HepG2 (cell line): ENCODE measurements at regions of chr13 and their contacts with region 1.

Region 1: GRCh38 chr13:108155185-108156106 is 59.9 kb downstream of the LIG4 start:
- DNase-seq: peak; percentile 40
- ATAC-seq: no peak
- H3K4me3 ChIP-seq: peak overlapping the region in 1 of 3 experiments; percentile 39; a peak in 1 of 6 replicates
- H3K27ac ChIP-seq: peak overlapping the region; percentile 66
- H3K4me1 ChIP-seq: peaks cover 28% of the 10 kb centered on the region
- H3K27me3 ChIP-seq: no peaks in the 10 kb centered on the region
- CTCF ChIP-seq: peak; percentile 72
- EP300 ChIP-seq: no peak
- POLR2A ChIP-seq: no peak
- RAD21 ChIP-seq: peak; percentile 59; the same call in 1 of the 2 replicates

Region 2: DNA sequence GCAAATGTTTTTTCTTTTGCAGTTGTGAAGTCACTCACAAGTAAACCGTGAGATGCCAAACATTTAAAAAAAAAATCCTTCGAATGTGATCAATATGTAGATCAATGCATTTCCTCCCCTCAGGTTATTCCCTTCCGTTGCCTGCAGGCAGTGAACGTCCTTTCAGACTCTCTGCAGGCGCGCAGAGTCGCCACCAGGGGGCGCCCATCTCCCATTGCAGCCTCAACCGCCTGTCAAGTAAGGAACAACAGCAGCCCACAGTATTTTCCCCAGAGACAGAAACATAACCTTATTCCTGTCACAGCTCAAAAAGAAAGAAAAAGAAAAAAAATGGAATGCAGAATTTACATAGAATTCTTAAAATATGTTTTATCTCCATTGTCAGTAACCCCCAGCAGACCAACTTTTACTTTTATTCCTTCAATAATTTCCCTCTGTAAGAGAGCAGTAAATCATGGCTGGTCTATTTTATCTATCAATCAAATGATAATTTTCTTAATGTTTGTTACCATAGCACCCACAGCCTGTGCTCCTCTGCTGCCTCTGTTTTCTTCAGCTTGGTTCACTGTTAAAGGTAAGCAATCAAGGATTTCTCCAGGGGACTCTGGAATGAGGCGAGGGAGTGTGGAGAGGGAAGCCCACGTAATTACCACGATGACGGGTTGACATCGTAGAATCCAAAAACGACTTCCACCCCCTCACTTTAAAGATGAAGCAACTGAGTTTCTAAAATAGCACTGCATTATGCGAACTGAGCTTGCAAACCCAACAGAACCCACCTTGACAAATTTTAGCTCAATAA is 949.9 kb before region 1 on chr13:
- CTCF ChIA-PET with region 1: interaction called, 9 read pairs
- POLR2A ChIA-PET with region 1: no interaction called
- in situ Hi-C with region 1: no loop called
- intact Hi-C with region 1: loop called (anchors 1 kb)
- DNase-seq: peak; percentile 31
- ATAC-seq: peak; percentile 94
- H3K4me3 ChIP-seq: no peak overlapping the region
- H3K27ac ChIP-seq: no peak overlapping the region
- H3K4me1 ChIP-seq: peaks cover 13% of the 10 kb centered on the region
- H3K27me3 ChIP-seq: no peaks in the 10 kb centered on the region
- CTCF ChIP-seq: peak; percentile 84
- EP300 ChIP-seq: no peak
- POLR2A ChIP-seq: no peak
- RAD21 ChIP-seq: 0 out of 2 replicates have a peak, but pooled peaks have one; percentile 45

Region 3: DNA sequence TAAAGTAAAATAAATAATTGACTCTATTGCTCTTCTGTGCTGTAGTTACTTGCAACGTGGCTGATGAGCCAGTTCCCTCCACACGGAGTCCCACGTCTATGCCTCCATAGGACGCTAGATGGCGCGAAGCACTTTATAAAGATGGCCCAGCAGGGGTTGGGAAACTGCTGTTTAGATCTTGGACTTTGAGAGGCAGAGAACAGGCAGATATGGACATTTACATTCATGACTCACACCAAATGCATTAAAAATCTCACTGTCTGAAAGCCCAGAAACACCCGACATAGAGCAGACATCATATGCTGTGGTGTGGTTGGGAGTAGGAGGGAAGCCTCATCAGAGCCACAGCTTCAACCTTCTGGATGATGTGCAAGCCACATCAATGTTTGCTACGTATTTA is 944.4 kb before region 1 on chr13:
- CTCF ChIA-PET with region 1: interaction called, 9 read pairs
- POLR2A ChIA-PET with region 1: no interaction called
- in situ Hi-C with region 1: loop called (anchors 5 kb)
- intact Hi-C with region 1: loop called (anchors 1 kb)
- DNase-seq: peak; percentile 78
- ATAC-seq: peak; percentile 100
- H3K4me3 ChIP-seq: no peak overlapping the region
- H3K27ac ChIP-seq: no peak overlapping the region
- H3K4me1 ChIP-seq: no peaks in the 10 kb centered on the region
- H3K27me3 ChIP-seq: peaks cover 0 to 26% of the 10 kb centered on the region in 2 experiments; a peak in 2 of 5 replicates
- CTCF ChIP-seq: peak; percentile 90
- EP300 ChIP-seq: no peak
- POLR2A ChIP-seq: no peak
- RAD21 ChIP-seq: no peak; the same call in 1 of the 2 replicates

Region 4: DNA sequence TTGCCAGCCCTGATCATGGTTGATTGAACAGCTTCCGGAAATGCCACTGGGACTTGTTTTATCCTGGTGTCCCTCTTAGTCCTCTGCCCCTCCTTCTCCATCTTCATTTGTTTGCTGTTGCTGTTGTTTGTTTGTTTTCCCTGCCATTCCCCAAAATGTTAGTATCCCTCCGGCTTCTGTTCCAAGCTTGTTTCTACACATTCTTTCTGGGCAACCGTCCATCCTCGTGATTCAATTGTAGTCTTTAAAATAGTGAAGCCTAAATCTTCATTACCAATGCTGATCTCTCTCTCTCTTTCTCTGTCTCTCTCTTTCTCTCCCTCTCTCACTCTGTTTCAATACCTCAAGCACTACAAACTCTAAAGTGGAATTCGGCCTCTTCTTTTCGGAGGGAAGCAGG is 938.2 kb before region 1 on chr13:
- CTCF ChIA-PET with region 1: interaction called, 3 read pairs
- POLR2A ChIA-PET with region 1: no interaction called
- in situ Hi-C with region 1: loop called (anchors 5 kb)
- intact Hi-C with region 1: no loop called
- DNase-seq: no peak
- ATAC-seq: no peak
- H3K4me3 ChIP-seq: no peak overlapping the region
- H3K27ac ChIP-seq: no peak overlapping the region
- H3K4me1 ChIP-seq: no peaks in the 10 kb centered on the region
- H3K27me3 ChIP-seq: peaks cover 0 to 30% of the 10 kb centered on the region in 2 experiments; a peak in 2 of 5 replicates
- CTCF ChIP-seq: no peak
- EP300 ChIP-seq: no peak
- POLR2A ChIP-seq: no peak
- RAD21 ChIP-seq: no peak

Region 5: DNA sequence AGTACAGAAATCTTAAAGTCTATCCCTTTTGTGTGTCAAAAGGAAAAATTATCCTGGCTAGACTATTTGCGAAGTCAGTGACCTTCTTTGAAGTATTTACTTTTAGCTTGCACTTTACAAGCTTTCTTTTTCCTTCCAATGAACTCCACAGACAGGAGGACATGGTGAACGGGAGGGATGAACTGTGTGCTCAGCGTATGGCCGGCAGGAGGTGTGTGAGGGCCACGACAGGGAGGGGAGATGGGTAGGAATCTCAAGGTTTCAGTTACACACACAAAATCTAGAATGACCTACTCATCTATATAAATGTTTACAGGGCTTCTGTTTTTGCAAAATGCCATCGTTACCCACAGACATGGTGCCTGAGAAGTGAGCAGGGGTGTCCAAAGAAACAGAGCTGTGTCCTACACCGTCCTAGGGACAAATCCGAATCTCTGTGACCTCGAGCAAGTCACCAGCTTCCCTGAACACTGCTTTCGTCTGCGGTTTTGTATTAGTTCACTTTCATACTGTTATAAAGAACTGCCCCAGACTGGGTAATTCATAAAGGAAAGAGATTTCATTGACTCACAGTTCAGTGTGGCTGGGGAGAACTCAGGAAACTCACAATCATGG is 477.3 kb before region 1 on chr13:
- CTCF ChIA-PET with region 1: interaction called, 7 read pairs
- POLR2A ChIA-PET with region 1: no interaction called
- in situ Hi-C with region 1: loop called (anchors 10 kb)
- intact Hi-C with region 1: loop called (anchors 1 kb)
- DNase-seq: no peak
- ATAC-seq: peak; percentile 93
- H3K4me3 ChIP-seq: no peak overlapping the region
- H3K27ac ChIP-seq: no peak overlapping the region
- H3K4me1 ChIP-seq: no peaks in the 10 kb centered on the region
- H3K27me3 ChIP-seq: no peaks in the 10 kb centered on the region
- CTCF ChIP-seq: peak; percentile 58
- EP300 ChIP-seq: no peak
- POLR2A ChIP-seq: no peak
- RAD21 ChIP-seq: no peak

Region 6: DNA sequence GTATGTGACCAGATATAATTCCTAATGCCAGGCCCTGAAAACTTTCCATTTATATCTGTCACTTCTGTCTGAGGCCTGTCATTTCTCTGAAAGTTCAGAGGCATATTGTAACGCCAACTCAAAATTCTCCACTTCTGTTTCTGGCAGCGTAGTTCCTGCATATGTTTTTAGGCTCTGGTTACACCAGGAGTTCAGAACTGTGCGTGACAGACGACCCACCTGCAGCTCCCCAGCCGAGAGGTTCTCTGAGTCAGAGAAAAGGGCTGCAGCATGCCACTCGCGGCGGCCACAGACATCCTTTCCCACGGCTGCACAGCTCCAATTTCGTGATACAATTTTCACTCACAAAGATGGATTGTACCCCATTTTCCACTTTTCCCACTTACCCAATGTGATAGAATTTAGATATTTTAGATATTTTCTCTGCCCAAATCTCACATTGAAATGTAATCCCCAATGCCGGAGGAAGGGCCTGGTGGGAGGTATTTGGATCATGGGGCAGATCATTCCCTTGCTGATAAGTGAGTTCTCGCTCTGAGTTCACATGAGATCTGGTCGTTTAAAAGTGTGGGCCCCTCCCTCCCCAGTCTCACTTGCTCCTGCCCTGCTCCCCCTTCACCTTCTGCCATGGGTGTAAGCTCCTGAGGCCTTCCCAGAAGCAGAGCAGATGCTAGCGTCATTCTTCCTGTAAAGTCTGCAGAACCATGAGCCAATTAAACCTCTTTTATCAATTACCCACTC is 248.2 kb before region 1 on chr13:
- CTCF ChIA-PET with region 1: interaction called, 15 read pairs
- POLR2A ChIA-PET with region 1: no interaction called
- in situ Hi-C with region 1: no loop called
- intact Hi-C with region 1: no loop called
- DNase-seq: no peak
- ATAC-seq: no peak
- H3K4me3 ChIP-seq: no peak overlapping the region
- H3K27ac ChIP-seq: no peak overlapping the region
- H3K4me1 ChIP-seq: no peaks in the 10 kb centered on the region
- H3K27me3 ChIP-seq: no peaks in the 10 kb centered on the region
- CTCF ChIP-seq: no peak
- EP300 ChIP-seq: no peak
- POLR2A ChIP-seq: no peak
- RAD21 ChIP-seq: no peak

Region 7: GRCh38 chr13:108003607-108004006 is 151.8 kb before region 1 on chr13:
- CTCF ChIA-PET with region 1: no interaction called
- POLR2A ChIA-PET with region 1: no interaction called
- in situ Hi-C with region 1: no loop called
- intact Hi-C with region 1: no loop called
- DNase-seq: no peak
- ATAC-seq: no peak
- H3K4me3 ChIP-seq: no peak overlapping the region
- H3K27ac ChIP-seq: no peak overlapping the region
- H3K4me1 ChIP-seq: no peaks in the 10 kb centered on the region
- H3K27me3 ChIP-seq: no peaks in the 10 kb centered on the region
- CTCF ChIP-seq: no peak
- EP300 ChIP-seq: no peak
- POLR2A ChIP-seq: no peak
- RAD21 ChIP-seq: no peak

Region 8: DNA sequence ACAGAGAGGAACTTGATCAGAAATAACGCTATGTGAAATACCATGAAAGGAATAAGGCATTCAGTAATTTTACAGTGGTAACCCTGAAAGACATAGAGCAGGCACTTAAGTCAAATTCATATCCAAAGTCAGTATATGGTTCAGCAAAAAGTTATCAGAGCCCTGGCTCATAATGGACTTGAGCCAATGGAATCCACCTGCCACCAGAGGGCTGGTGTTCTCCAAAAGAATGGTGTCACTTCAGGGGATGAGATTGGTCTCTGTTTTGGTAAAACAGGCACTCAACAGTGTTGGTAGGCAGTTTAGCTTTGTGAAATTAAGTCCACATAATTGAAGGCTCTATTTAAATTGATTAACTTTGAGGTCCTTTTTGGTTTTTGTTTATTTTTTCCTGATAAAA is 34.0 kb before region 1 on chr13:
- CTCF ChIA-PET with region 1: no interaction called
- POLR2A ChIA-PET with region 1: no interaction called
- in situ Hi-C with region 1: no loop called
- intact Hi-C with region 1: loop called (anchors 1 kb)
- DNase-seq: peak; percentile 1
- ATAC-seq: 0 out of 3 replicates have a peak, but pooled peaks have one; percentile 23
- H3K4me3 ChIP-seq: no peak overlapping the region
- H3K27ac ChIP-seq: no peak overlapping the region
- H3K4me1 ChIP-seq: no peaks in the 10 kb centered on the region
- H3K27me3 ChIP-seq: no peaks in the 10 kb centered on the region
- CTCF ChIP-seq: no peak
- EP300 ChIP-seq: no peak
- POLR2A ChIP-seq: no peak
- RAD21 ChIP-seq: no peak